GM13976 (cell line): ENCODE measurements at regions of chr4 and their contacts with region 1.

Region 1: GRCh38 chr4:112327965-112328733 is 31.0 kb downstream of the ALPK1 start:
- DNase-seq: peak; percentile 41
- CTCF ChIP-seq: peak; percentile 17

Region 2: GRCh38 chr4:112523764-112524505 is 195.8 kb after region 1 on chr4:
- in situ Hi-C with region 1: loop called (anchors 10 kb)
- DNase-seq: peak; percentile 89
- CTCF ChIP-seq: peak; percentile 82

Region 3: DNA sequence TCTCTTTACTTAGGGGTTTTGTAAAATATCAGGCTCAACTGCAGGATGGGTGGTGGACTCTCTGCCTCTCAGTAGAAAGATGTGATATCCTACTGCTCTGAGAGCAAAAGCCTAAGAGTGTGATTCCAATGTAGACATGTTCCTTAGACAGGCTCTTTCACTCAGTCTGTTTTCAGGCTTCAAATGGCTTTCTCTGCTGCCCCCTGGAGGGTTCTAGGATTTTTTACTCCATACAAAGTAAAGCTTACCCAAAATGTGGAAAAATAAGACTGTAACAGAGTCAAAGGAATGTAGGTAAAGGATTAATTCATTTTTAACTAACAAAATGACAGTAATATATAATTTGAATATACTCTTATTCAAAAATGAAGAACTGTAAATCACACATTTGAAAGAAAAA is 276.4 kb after region 1 on chr4:
- in situ Hi-C with region 1: loop called (anchors 25 kb)
- DNase-seq: peak; percentile 54
- CTCF ChIP-seq: peak; percentile 44

Region 4: DNA sequence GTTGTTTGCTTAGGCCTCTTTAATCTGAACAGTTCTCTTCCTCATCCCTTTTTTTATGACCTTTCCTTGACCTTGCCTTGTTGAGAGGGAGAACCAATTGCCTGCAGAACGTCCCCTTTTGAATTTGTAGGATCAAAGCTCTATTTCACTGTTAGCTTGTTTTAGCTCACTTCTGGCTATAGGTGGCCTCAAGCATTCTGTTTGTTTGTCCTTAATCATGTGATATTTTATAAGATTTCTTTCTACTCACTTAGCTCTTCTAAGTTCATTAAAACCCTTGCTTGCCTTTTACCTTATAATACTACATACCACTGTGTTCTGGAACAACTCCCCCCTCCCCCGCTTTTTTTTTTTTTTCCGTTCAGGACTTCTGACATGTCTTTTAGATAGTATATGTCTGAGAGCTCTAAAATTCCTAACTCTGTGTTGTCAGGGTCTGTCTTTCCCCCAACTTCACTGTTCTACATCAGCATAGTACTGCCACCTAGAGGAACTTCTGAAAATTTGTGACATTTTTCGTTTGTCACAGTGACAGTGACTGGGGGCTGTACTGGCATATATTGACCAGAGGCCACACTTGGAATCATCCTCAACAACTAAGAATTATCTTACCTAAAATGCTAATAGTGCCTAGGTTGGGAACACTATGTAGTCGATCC is 437.3 kb after region 1 on chr4:
- in situ Hi-C with region 1: loop called (anchors 25 kb)
- DNase-seq: peak; percentile 59
- CTCF ChIP-seq: peak; percentile 46